KBM-7 (cell line): ENCODE measurements at regions of chr21 and their contacts with region 1.

Region 1: DNA sequence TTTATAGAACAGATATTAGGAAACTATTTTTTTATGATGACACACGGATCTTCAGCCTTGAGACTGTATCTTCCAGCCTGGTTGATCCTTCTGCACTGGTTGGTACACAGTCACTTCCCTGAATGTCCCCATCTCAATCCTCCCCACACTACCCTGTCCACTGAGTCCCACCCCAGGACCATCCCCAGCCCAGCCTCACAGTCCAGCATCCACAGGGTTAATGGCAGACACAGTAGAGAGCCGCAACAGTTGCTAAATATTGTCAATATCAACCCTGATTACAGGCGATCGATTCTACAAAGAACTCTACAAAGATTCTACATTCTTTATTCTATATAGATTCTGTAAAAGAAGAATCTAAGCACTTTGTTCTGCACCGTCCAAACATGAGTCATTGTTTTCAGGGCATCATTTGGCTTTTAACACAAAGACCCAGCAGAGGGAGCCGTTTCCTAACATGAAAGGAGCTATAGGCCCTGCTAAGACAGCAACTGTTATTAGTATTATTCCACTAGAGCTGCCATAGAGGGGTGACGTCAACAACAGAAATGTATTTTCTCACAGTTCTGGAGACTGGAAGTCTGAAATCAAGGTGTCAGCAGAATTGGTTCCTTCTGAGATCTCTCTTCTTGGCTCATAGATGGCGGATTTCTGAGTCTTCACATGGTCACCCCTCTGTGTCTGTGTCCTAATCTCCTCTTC is 30.1 kb upstream of the IFNAR2 start:
- DNase-seq: peak; percentile 86

Region 2: GRCh38 chr21:32653311-32653901 is 546.3 kb before region 1 on chr21:
- in situ Hi-C with region 1: loop called (anchors 25 kb)
- DNase-seq: peak; percentile 73

Region 3: GRCh38 chr21:33588485-33589335 is 389.0 kb after region 1 on chr21 and contains the start of gene DONSON:
- in situ Hi-C with region 1: no loop called
- DNase-seq: peak; percentile 79